Adrenal gland (tissue), 19 donors: ENCODE measurements at regions of chr2 and their contacts with region 1.

Region 1: GRCh38 chr2:206392118-206392517 is 51.2 kb upstream of the ADAM23 start:
- DNase-seq: peak; percentile 49 to 77 (median 52)
- H3K4me3 ChIP-seq: no peak overlapping the region
- H3K27ac ChIP-seq: no peak overlapping the region
- H3K4me1 ChIP-seq: no peaks in the 10 kb centered on the region
- H3K27me3 ChIP-seq: no peaks in the 10 kb centered on the region
- CTCF ChIP-seq: peak; percentile 28 to 66 (median 61)
- POLR2A ChIP-seq: no peak

Region 2: GRCh38 chr2:206556357-206556949 is 164.3 kb after region 1 on chr2:
- intact Hi-C with region 1: loop called in 1 of 2 experiments (anchors 5 kb)
- DNase-seq: no peak
- H3K4me3 ChIP-seq: no peak overlapping the region
- H3K27ac ChIP-seq: no peak overlapping the region
- H3K4me1 ChIP-seq: no peaks in the 10 kb centered on the region
- H3K27me3 ChIP-seq: no peaks in the 10 kb centered on the region
- CTCF ChIP-seq: peak in 5 of 6 experiments; percentile 23 to 58 (median 39)
- POLR2A ChIP-seq: no peak